H1 (cell line): ENCODE measurements at regions of chr13 and their contacts with region 1.

Region 1: DNA sequence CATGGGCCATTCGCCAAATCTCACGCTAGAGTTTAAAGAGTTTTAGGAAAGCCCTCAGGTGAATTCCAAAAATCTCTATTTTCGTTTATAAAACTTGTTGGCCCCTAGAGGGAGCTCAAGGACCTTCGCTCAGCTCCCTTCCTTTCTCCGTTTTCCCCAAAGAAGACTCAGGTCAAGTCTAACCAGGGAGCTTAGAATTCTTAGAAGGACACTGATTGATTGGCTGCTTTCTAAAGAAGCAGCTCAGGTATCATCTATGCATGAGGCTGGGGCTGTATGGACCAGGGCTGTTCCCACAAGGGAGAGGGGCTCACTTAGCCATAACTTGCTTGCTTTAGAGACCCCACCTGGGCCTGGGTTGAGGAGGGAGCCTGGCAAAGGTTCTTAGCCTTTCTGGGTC is 20.5 kb downstream of the DZIP1 start:
- DNase-seq: peak in 1 of 2 experiments; percentile 48
- H3K4me3 ChIP-seq: no peak overlapping the region
- H3K27ac ChIP-seq: no peak overlapping the region
- H3K4me1 ChIP-seq: no peaks in the 10 kb centered on the region; a peak in 1 of 7 replicates
- H3K27me3 ChIP-seq: no peaks in the 10 kb centered on the region
- CTCF ChIP-seq: peak in 2 of 3 experiments; percentile 58 to 80; a peak in 3 of 4 replicates
- EP300 ChIP-seq: no peak
- POLR2A ChIP-seq: no peak
- RAD21 ChIP-seq: peak; percentile 90 to 93

Region 2: GRCh38 chr13:95660981-95661581 is 37.1 kb after region 1 on chr13:
- CTCF ChIA-PET with region 1: interaction called, 23 read pairs
- POLR2A ChIA-PET with region 1: no interaction called
- DNase-seq: no peak
- H3K4me3 ChIP-seq: no peak overlapping the region
- H3K27ac ChIP-seq: no peak overlapping the region
- H3K4me1 ChIP-seq: no peaks in the 10 kb centered on the region
- H3K27me3 ChIP-seq: no peaks in the 10 kb centered on the region; a peak in 1 of 7 replicates
- CTCF ChIP-seq: peak in 1 of 3 experiments; percentile 31; a peak in 1 of 4 replicates
- EP300 ChIP-seq: no peak
- POLR2A ChIP-seq: no peak
- RAD21 ChIP-seq: peak in 1 of 2 experiments; percentile 64; a peak in 3 of 4 replicates

Region 3: GRCh38 chr13:95671597-95671996 is 47.6 kb after region 1 on chr13:
- CTCF ChIA-PET with region 1: interaction called, 12 read pairs
- POLR2A ChIA-PET with region 1: interaction called, 3 read pairs
- DNase-seq: no peak
- H3K4me3 ChIP-seq: no peak overlapping the region
- H3K27ac ChIP-seq: no peak overlapping the region
- H3K4me1 ChIP-seq: no peaks in the 10 kb centered on the region
- H3K27me3 ChIP-seq: no peaks in the 10 kb centered on the region
- CTCF ChIP-seq: no peak
- EP300 ChIP-seq: no peak
- POLR2A ChIP-seq: no peak
- RAD21 ChIP-seq: no peak

Region 4: GRCh38 chr13:95822303-95822702 is 198.3 kb after region 1 on chr13:
- CTCF ChIA-PET with region 1: interaction called, 10 read pairs
- POLR2A ChIA-PET with region 1: no interaction called
- DNase-seq: no peak
- H3K4me3 ChIP-seq: no peak overlapping the region
- H3K27ac ChIP-seq: no peak overlapping the region
- H3K4me1 ChIP-seq: no peaks in the 10 kb centered on the region
- H3K27me3 ChIP-seq: no peaks in the 10 kb centered on the region
- CTCF ChIP-seq: no peak
- EP300 ChIP-seq: no peak
- POLR2A ChIP-seq: no peak
- RAD21 ChIP-seq: no peak

Region 5: GRCh38 chr13:95862401-95862800 is 238.4 kb after region 1 on chr13:
- CTCF ChIA-PET with region 1: no interaction called
- POLR2A ChIA-PET with region 1: no interaction called
- DNase-seq: no peak
- H3K4me3 ChIP-seq: no peak overlapping the region
- H3K27ac ChIP-seq: no peak overlapping the region
- H3K4me1 ChIP-seq: no peaks in the 10 kb centered on the region
- H3K27me3 ChIP-seq: no peaks in the 10 kb centered on the region
- CTCF ChIP-seq: no peak
- EP300 ChIP-seq: no peak
- POLR2A ChIP-seq: no peak
- RAD21 ChIP-seq: no peak

Region 6: GRCh38 chr13:96011291-96011872 is 387.4 kb after region 1 on chr13:
- CTCF ChIA-PET with region 1: no interaction called
- POLR2A ChIA-PET with region 1: no interaction called
- DNase-seq: no peak
- H3K4me3 ChIP-seq: no peak overlapping the region
- H3K27ac ChIP-seq: no peak overlapping the region
- H3K4me1 ChIP-seq: no peaks in the 10 kb centered on the region
- H3K27me3 ChIP-seq: no peaks in the 10 kb centered on the region
- CTCF ChIP-seq: no peak
- EP300 ChIP-seq: no peak
- POLR2A ChIP-seq: no peak
- RAD21 ChIP-seq: no peak